ENCODE measurements at regions of chr1 and their contacts with region 1.

Region 1: DNA sequence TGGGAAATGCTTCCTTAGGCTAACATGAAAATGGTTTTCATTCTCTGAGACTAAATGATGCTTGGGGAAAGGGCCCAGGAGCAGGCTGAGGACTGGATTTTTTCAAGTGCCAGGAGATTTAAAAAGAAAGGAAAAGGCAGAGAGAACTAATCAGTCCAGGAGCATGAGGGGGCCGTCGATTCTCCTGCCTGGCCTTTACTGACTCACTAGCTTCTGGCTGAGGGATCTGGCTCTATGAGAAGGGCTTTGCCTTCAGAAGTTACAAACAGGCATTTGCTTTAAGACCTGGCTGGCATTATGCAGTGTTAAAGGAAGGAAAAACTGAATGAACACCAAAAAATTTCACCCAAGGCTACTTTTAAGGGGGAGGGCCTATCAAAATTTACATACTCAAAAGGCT is 359.2 kb downstream of the PBX1 start:
- DNase-seq: no peak
- ATAC-seq: no peak
- H3K4me3 ChIP-seq: no peak overlapping the region
- H3K27ac ChIP-seq: no peak overlapping the region
- H3K4me1 ChIP-seq: no peaks in the 10 kb centered on the region
- H3K27me3 ChIP-seq: no peaks in the 10 kb centered on the region
- CTCF ChIP-seq: no peak

Region 2: DNA sequence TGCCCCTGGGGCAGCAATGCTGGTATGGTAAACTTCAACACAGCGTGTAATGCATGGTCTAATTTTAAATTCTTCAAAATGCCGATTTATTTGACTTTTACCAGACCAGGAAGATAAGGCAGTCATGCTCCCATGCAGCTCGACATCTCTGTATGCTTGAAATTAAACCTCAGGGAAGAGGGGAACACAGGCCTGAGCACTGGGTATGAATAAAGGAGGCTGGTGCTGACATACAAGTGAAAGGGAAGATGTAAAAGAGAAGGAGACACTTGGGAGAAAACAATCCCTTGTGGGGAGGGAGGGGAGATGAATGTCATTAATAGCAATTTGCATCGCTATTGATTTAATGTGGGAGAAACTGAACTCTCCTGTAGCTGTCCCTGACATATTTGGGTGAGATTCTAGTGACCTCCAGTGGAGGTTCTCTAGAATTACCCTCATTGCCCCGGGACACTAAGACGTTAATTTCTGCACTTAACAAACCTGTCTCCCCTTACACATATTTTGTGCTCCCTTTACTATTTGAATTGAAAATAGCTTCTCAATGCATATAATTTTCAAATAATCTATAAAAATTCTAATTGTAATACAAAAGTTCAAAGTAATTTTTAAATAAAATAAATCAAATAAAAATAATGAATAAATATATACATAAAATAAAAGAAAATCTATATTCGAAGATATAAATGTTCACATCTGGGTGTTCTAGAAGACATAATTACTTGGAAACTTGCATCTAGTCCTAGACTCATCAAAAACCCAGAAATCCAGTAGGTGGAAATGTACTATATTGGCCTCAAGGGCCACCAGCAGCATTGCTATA is 155.3 kb after region 1 on chr1:
- intact Hi-C with region 1: loop called in 1 of 2 experiments (anchors 5 kb)
- DNase-seq: peak in 2 of 4 donors; percentile 41 to 65
- ATAC-seq: peak; percentile 92
- H3K4me3 ChIP-seq: no peak overlapping the region
- H3K27ac ChIP-seq: no peak overlapping the region
- H3K4me1 ChIP-seq: no peaks in the 10 kb centered on the region
- H3K27me3 ChIP-seq: no peaks in the 10 kb centered on the region
- CTCF ChIP-seq: peak; percentile 57 to 83

Measured in left lung (tissue), 14 donors.